ENCODE measurements at regions of chr9 and their contacts with region 1.

Region 1: DNA sequence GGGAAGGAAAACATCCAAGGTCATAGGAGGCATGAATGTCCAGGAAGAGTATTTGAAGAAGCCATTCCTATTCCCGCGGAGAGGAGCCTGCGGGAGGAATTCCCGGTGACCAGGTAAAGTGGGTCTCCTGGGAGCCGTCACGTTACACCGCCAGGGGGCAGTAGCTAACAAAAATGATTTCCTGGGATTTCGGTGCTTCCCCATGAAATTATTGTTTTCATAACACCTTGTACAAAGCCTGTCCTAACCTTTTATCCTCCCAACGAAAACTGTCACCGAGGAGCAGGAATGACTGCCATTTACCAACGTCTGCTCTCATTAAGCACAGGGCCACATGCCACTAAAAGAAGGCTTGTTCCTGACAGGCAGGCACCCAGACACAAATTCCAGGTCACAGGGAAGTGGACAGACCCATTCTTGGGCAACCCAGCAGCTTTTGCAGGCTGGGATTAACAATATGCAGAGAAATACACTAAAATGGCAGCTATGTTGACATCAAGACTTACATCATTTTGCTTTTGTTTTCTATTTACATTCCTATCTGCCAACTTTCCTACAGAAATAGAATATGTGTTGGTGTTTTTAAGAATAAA is 41.2 kb upstream of the CTSL start:
- DNase-seq: peak; percentile 44 to 73
- ATAC-seq: peak; percentile 55 to 89; a peak in 3 of 6 replicates
- H3K4me3 ChIP-seq: no peak overlapping the region
- H3K27ac ChIP-seq: peak overlapping the region; percentile 48 to 70; a peak in 5 of 6 replicates
- H3K4me1 ChIP-seq: peaks cover 27% of the 10 kb centered on the region; the same call in 2 of the 3 replicates
- CTCF ChIP-seq: peak; percentile 86
- EP300 ChIP-seq: no peak
- POLR2A ChIP-seq: no peak
- RAD21 ChIP-seq: peak; percentile 85 to 87

Region 2: DNA sequence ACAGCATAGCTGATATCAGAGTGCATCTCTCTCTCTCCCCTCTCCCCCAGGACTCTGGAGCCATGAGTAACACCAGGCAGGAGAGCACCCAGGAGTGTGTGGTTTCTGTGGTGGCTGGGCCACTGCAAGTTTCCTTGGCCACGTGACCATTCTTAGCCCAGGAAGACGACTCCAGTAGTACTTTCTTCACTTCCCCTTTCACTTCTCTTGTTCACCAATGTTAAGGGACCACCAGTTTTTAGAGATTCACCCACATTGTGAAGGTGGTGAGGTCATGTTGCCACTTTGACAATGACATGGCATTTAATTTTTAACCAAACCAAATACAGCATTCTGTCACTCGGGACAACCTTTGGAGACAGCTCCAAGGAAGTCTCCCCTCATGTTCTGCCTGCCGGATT is 204.9 kb before region 1 on chr9:
- CTCF ChIA-PET with region 1: no interaction called
- POLR2A ChIA-PET with region 1: no interaction called
- DNase-seq: no peak
- ATAC-seq: peak in 1 of 2 experiments; percentile 23; a peak in 2 of 6 replicates
- H3K4me3 ChIP-seq: no peak overlapping the region
- H3K27ac ChIP-seq: peak overlapping the region; percentile 43 to 46; a peak in 2 of 6 replicates
- H3K4me1 ChIP-seq: peaks cover 8% of the 10 kb centered on the region
- CTCF ChIP-seq: no peak
- EP300 ChIP-seq: no peak
- POLR2A ChIP-seq: no peak
- RAD21 ChIP-seq: no peak

Region 3: GRCh38 chr9:87630266-87630665 is 54.5 kb before region 1 on chr9:
- CTCF ChIA-PET with region 1: no interaction called
- POLR2A ChIA-PET with region 1: no interaction called
- DNase-seq: no peak
- ATAC-seq: no peak
- H3K4me3 ChIP-seq: no peak overlapping the region
- H3K27ac ChIP-seq: no peak overlapping the region
- H3K4me1 ChIP-seq: no peaks in the 10 kb centered on the region
- CTCF ChIP-seq: no peak
- EP300 ChIP-seq: no peak
- POLR2A ChIP-seq: no peak
- RAD21 ChIP-seq: no peak

Region 4: DNA sequence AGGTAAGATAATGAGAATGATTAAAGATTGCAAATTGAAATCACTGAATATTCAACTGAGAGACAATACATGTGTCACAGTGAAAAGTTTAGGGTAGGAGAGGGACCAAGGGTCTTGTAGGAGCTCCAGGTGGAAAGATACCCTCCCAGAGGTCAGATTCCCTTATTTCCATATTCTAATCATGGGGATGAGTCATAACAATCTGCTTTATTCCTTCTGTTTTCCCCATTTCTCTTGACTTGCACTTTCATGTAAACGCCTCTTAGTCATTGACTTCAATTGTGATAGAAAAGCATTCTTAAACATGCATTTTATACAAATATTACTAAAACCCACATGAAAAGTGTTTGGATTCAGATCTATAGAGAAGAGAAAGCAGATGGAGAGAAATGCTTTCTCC is 40.1 kb before region 1 on chr9:
- CTCF ChIA-PET with region 1: no interaction called
- POLR2A ChIA-PET with region 1: no interaction called
- DNase-seq: no peak
- ATAC-seq: no peak
- H3K4me3 ChIP-seq: no peak overlapping the region
- H3K27ac ChIP-seq: no peak overlapping the region
- H3K4me1 ChIP-seq: no peaks in the 10 kb centered on the region
- CTCF ChIP-seq: no peak
- EP300 ChIP-seq: no peak
- POLR2A ChIP-seq: no peak
- RAD21 ChIP-seq: no peak

Region 5: DNA sequence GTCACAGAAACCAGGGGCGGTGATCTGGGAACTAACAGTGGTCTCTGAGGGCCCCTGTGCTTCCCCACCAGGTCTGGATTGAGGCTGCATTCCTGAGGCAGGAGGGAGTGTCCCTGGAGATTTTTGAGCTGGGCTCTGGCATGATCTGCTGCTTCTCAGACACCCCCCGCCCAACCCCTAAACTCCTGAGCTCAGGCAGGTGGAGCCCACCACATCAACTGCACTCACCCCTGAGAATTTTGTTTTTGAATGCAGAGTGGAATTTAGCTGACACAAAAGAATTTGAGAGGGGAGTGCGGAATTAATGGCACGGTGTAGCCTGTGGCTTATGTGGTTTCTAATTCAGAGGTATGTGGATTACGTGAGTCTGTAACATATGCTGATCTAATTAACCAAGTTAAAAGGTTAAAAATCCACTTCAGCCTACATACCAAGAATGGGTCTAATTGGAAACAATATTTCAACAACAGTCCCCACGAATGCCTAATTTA is 17.3 kb after region 1 on chr9:
- CTCF ChIA-PET with region 1: interaction called, 17 read pairs
- POLR2A ChIA-PET with region 1: no interaction called
- DNase-seq: no peak
- ATAC-seq: no peak
- H3K4me3 ChIP-seq: no peak overlapping the region
- H3K27ac ChIP-seq: 0 out of 6 replicates have a peak overlapping the region, but pooled peaks of 1 of the 2 experiments have one; percentile 20
- H3K4me1 ChIP-seq: peaks cover 28% of the 10 kb centered on the region
- CTCF ChIP-seq: no peak
- EP300 ChIP-seq: no peak
- POLR2A ChIP-seq: no peak
- RAD21 ChIP-seq: no peak

Region 6: GRCh38 chr9:87707805-87708506 is 23.2 kb after region 1 on chr9:
- CTCF ChIA-PET with region 1: interaction called, 13 read pairs
- POLR2A ChIA-PET with region 1: no interaction called
- DNase-seq: no peak
- ATAC-seq: no peak
- H3K4me3 ChIP-seq: no peak overlapping the region
- H3K27ac ChIP-seq: peak overlapping the region in 1 of 2 experiments; percentile 16; a peak in 1 of 6 replicates
- H3K4me1 ChIP-seq: peaks cover 37% of the 10 kb centered on the region
- CTCF ChIP-seq: no peak
- EP300 ChIP-seq: no peak
- POLR2A ChIP-seq: no peak
- RAD21 ChIP-seq: no peak

Region 7: DNA sequence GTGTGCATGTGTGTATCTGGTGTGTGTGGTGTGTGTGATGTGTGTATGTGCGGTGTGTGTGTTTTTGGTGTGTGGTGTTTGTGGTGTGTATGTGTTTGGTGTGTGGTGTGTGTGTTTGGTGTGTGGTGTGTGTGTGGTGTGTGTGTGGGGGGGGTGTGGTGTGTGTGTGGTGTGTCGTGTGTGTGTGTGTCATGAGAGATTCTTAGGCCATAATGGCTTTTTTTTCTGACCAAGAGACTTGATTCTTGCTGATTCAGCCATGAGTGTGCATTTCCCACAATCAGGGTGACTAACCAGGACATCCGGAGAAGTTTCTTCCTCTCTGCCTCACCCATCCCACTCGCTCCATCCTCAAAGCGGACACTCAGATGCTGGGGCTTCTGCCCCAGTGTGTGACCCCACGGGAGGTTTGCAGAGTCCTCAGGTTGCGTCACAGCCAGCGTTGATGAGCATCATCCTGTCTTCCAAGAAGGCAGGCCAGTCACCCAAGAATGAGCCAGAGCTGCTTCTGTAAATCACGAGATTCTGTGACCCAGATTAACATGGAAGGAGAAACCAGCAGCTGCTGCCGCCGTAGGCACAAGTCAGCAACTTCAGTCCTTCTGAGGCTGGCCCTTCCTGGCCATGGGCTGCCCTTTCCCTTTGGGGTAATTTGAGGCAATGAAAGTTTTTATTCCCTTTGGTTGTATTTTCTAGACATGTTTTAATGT is 28.7 kb after region 1 on chr9:
- CTCF ChIA-PET with region 1: interaction called, 12 read pairs
- POLR2A ChIA-PET with region 1: no interaction called
- DNase-seq: peak; percentile 89 to 99
- ATAC-seq: peak; percentile 93
- H3K4me3 ChIP-seq: peak overlapping the region; percentile 24; the same call in 1 of the 3 replicates
- H3K27ac ChIP-seq: peak overlapping the region; percentile 95
- H3K4me1 ChIP-seq: peaks cover 55% of the 10 kb centered on the region
- CTCF ChIP-seq: no peak; the same call in 2 of the 3 replicates
- EP300 ChIP-seq: peak; percentile 92 to 97; a peak in 4 of 5 replicates
- POLR2A ChIP-seq: 0 out of 2 replicates have a peak, but pooled peaks have one; percentile 27
- RAD21 ChIP-seq: peak; percentile 9 to 42; a peak in 2 of 5 replicates

Region 8: DNA sequence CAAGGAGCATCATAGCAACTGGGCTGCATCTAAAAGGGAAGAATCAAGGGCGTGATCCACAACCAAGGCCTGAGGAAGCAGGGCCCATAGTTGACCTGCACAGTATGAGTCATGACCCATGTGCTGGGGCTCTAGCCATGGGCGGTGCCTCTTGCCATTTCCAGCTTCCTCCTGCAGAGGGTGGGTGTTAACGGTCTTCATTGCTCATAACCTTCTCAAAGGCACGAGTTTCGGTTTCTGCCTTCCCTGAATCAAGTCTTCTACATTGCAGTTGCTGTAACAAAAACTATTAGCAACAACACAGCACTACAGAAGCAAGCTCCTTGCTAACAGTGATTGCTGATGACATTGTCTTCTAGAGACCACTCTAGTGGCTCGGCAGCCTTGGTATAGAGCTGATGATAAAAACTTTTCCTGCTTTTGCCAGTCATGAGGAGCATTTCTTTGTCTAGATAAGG is 108.1 kb after region 1 on chr9:
- CTCF ChIA-PET with region 1: interaction called, 22 read pairs
- POLR2A ChIA-PET with region 1: no interaction called
- DNase-seq: peak; percentile 84 to 95
- ATAC-seq: peak; percentile 97 to 98
- H3K4me3 ChIP-seq: peak overlapping the region; percentile 28
- H3K27ac ChIP-seq: peak overlapping the region; percentile 92 to 94
- H3K4me1 ChIP-seq: peaks cover 42% of the 10 kb centered on the region
- CTCF ChIP-seq: 0 out of 3 replicates have a peak, but pooled peaks have one; percentile 14
- EP300 ChIP-seq: no peak; a peak in 1 of 5 replicates
- POLR2A ChIP-seq: no peak
- RAD21 ChIP-seq: peak in 1 of 2 experiments; percentile 33; a peak in 2 of 5 replicates

Region 9: DNA sequence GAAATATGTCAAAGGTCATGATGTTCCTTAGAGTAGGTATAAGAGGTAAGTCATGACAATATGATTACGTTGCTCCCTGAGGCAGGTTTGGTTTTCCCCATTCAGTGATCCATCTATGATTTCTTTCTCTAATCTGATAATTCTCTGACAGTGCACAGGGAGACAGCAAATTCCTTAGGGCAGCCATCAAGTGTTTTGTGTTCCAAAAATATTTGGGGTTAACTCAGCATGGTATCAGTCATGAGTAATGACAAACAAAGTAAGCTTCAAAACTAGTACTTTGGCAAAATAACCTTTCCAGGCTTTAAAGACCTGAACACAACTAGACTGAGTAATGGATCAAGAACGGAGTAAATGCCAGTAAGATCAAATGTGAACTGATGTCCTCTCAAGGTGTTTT is 142.6 kb after region 1 on chr9:
- CTCF ChIA-PET with region 1: interaction called, 473 read pairs
- POLR2A ChIA-PET with region 1: no interaction called
- DNase-seq: no peak
- ATAC-seq: no peak
- H3K4me3 ChIP-seq: no peak overlapping the region
- H3K27ac ChIP-seq: no peak overlapping the region
- H3K4me1 ChIP-seq: peaks cover 3% of the 10 kb centered on the region; the same call in 2 of the 3 replicates
- CTCF ChIP-seq: no peak
- EP300 ChIP-seq: no peak
- POLR2A ChIP-seq: no peak
- RAD21 ChIP-seq: no peak